Activated naive CD8-positive, alpha-beta T cell treated with anti-CD3 and anti-CD28 coated beads, Interleukin-2, amount 10 ng/mL, durations not matched to agents 7 days and 5 days (primary cell): ENCODE measurements at regions of chr17 and their contacts with region 1.

Region 1: DNA sequence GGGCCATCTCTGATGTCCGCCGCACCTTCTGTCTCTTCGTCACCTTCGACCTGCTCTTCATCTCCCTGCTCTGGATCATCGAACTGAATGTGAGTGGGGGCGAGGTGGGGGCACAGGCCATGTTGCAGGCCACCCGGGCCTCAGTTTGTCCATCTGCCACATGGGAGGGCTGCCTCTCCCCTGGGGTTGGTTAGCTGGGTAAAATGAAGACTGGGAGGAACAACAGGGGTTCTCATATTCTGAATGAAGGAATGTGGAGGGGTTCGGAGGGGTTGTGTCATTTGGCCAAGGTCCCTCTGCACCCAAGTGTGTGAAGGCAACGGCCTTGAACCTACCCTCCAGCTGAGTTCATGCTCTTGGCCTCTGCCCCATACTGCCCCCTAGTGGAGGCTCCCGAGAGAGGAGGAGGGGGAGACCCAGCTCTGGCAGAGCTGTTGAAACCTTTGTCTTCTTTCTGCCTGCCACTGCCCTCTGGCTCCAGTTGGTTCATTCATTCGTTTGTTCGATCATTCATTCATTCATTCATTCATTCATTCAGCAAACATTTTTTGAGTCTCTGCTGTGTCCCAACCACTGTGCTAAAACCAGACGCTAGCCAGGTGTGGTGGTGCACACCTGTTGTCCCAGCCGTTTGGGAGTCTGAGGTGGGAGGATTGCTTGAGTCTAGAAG is 11.4 kb upstream of the TCAP start:
- DNase-seq: peak; percentile 82
- ATAC-seq: peak; percentile 73
- H3K4me3 Mint-ChIP-seq: no peak overlapping the region
- H3K27ac Mint-ChIP-seq: no peak overlapping the region
- H3K4me1 Mint-ChIP-seq: peaks cover 23% of the 10 kb centered on the region
- H3K27me3 Mint-ChIP-seq: no peaks in the 10 kb centered on the region

Region 2: GRCh38 chr17:39563476-39563875 is 90.3 kb before region 1 on chr17:
- POLR2A ChIA-PET with region 1: interaction called, 11 read pairs
- DNase-seq: no peak
- ATAC-seq: no peak
- H3K4me3 Mint-ChIP-seq: no peak overlapping the region
- H3K27ac Mint-ChIP-seq: no peak overlapping the region
- H3K4me1 Mint-ChIP-seq: no peaks in the 10 kb centered on the region
- H3K27me3 Mint-ChIP-seq: no peaks in the 10 kb centered on the region